ENCODE measurements at regions of chr6 and their contacts with region 1.

Region 1: GRCh38 chr6:37691904-37692806 is 5.5 kb downstream of the MDGA1 start:
- DNase-seq: peak; percentile 58 to 75
- H3K4me3 ChIP-seq: no peak overlapping the region
- H3K27ac ChIP-seq: no peak overlapping the region
- H3K4me1 ChIP-seq: peaks cover 0 to 6% of the 10 kb centered on the region in 2 donors
- H3K27me3 ChIP-seq: no peaks in the 10 kb centered on the region
- CTCF ChIP-seq: peak; percentile 82 to 97 (median 90)
- POLR2A ChIP-seq: no peak

Region 2: DNA sequence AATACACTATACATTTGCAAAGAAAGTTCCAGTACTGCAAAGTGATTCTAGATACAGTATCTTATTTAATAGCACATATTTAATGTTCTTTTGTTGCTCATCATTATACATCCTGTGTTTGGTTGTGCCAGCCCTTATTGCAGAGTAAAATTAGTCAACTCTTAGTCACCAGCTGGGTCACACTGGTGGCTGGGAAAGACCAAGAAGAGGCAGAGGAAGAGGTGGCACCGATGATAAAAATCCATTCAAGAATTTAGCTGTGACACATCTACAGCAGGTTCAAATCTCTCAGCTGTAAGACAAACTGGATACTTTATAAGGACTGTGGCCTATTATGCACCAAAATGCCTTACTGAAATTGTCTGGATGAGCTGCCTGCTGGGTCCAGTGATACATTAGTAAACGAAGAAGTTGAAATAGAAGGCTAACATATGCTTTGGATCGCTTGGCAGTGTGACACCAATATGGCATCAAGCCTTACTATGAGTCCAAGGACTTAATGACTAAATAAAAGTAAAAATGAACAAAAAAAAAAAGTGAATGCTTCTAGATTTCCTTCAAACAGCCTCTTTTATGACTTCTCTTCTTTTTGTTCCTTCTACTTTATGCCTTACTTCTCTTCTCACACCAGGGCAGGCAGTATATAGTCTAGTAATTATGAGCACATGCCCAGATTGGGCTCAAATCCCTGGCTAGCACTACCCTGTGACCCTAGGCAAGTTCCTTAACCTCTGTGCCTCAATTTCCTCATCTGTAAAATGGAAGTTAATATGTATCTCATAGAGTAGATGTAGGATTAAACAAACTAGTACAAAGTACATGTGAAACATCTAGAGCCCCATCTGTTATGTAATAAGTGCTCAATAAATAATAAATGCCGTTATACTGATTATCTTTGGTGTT is 367.8 kb before region 1 on chr6:
- intact Hi-C with region 1: loop called (anchors 5 kb)
- DNase-seq: no peak
- H3K4me3 ChIP-seq: no peak overlapping the region
- H3K27ac ChIP-seq: no peak overlapping the region
- H3K4me1 ChIP-seq: no peaks in the 10 kb centered on the region
- H3K27me3 ChIP-seq: no peaks in the 10 kb centered on the region
- CTCF ChIP-seq: no peak
- POLR2A ChIP-seq: no peak

Region 3: DNA sequence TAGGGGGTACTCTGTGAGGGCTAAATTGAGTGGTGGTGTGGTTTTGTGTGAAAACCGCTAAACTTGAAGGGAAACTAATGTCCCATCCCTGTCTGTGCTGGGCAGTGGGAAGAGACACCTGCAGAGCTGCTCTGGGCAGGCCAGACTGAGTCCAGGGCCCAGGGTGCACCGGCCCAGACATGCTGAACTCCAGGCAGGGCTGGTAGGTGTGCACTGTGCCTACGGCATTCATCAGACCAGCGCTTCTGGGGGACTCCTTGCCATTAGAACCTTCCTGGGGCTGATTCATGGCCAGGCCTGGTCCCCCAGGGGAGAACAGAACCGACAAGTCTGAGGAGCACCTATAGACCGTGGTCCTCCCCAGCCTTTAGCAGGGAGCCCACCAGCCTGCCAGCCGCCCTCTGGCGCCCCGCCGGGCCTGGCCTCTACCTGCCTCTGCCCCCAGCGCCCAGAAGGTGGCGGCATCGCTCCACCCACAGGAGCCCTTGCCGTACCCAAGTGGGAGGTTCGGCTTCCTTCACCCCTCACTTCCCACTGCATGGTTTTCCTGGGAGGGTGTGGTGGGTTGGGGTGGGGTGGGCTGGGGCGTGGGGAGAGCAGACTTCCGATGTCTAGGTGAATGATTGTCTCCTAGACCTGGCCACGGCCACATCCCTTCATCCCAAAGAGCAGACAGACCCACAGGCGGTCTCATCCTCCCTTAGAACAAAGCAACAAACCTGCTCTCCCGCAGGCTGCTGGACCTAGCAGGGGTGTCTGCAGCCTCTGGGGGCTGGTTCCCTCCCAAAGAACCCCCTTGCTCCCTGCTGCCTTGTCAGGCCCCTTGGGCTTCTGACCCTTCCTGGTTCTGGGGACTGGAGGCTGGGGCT is 208.0 kb before region 1 on chr6:
- intact Hi-C with region 1: loop called (anchors 10 kb)
- DNase-seq: peak; percentile 41 to 61
- H3K4me3 ChIP-seq: no peak overlapping the region
- H3K27ac ChIP-seq: no peak overlapping the region
- H3K4me1 ChIP-seq: no peaks in the 10 kb centered on the region
- H3K27me3 ChIP-seq: no peaks in the 10 kb centered on the region
- CTCF ChIP-seq: peak; percentile 68 to 75 (median 72)
- POLR2A ChIP-seq: no peak

Measured in uterus (tissue), 4 donors.